Calu3 (cell line): ENCODE measurements at regions of chr7 and their contacts with region 1.

Region 1: DNA sequence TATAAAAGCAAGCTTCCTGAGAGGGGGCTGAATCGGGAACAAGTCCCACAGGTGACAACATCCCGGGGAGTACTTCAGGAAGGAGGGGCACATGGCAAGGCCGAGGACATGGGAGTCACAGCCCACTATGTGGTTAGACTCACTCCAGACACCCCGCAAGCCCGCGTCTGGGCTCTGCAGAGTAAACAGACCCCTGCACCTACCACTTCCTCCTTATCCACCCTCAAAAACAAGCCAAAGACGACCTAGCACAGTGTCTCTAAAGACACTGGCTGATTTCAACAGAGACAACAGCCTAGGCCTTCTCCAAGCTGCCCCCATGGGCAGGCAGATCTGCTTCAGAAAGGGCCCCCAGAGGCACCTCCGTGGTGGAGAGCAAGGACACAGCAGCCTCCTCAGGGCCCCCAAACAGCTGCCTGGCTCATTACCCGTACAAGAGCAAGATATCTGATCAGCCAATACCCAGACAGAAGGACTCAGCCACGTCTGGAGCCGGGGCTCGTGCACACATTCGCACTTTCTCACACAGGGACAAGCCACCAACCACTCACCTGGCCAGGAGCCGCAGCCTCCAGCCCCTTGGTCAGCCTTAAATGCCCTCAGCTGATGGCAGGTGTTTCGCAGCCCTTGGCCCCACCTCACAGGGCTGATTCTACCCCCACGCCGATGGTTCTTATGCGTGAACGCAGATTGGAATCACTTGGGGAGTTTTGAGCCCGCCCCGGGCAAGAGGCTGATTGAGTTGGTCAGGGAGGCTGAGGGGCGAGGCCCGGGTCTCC is 10.7 kb upstream of the KPNA7 start:
- DNase-seq: peak; percentile 26
- H3K4me3 Mint-ChIP-seq: no peak overlapping the region
- H3K27ac Mint-ChIP-seq: peak overlapping the region; percentile 63
- H3K4me1 Mint-ChIP-seq: peaks cover 11% of the 10 kb centered on the region
- H3K27me3 Mint-ChIP-seq: no peaks in the 10 kb centered on the region
- CTCF ChIP-seq: no peak

Region 2: GRCh38 chr7:98724591-98724990 is 494.0 kb before region 1 on chr7:
- CTCF ChIA-PET with region 1: no interaction called
- intact Hi-C with region 1: no loop called
- DNase-seq: no peak
- H3K4me3 Mint-ChIP-seq: no peak overlapping the region
- H3K27ac Mint-ChIP-seq: no peak overlapping the region
- H3K4me1 Mint-ChIP-seq: no peaks in the 10 kb centered on the region
- H3K27me3 Mint-ChIP-seq: peaks cover 55% of the 10 kb centered on the region
- CTCF ChIP-seq: no peak

Region 3: DNA sequence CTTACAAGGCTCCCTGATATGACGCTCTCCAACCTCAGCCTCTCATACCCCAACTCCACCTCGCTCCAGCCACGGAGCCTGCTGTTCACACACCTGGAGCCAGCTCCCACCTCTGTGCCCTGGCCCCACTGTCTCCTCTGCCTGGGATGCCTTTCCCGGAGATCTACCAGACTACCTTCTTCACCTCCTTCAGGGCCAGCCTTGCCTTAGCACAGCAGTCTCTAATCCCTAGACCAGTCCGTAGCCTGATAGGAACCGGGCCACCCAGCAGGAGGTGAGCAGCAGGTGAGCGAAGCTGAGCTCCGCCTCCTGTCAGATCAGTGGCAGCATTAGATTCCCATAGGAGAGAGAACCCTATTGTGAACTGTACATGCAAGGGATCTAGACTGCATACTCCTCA is 51.5 kb before region 1 on chr7:
- CTCF ChIA-PET with region 1: interaction called, 3 read pairs
- intact Hi-C with region 1: loop called (anchors 2 kb)
- DNase-seq: no peak
- H3K4me3 Mint-ChIP-seq: no peak overlapping the region
- H3K27ac Mint-ChIP-seq: no peak overlapping the region
- H3K4me1 Mint-ChIP-seq: no peaks in the 10 kb centered on the region
- H3K27me3 Mint-ChIP-seq: no peaks in the 10 kb centered on the region
- CTCF ChIP-seq: no peak